ENCODE measurements at regions of chr1 and their contacts with region 1.

Region 1: GRCh38 chr1:198157241-198157846 is 546 bp downstream of the NEK7 start:
- DNase-seq: peak; percentile 83
- ATAC-seq: peak; percentile 32
- H3K4me3 Mint-ChIP-seq: peak overlapping the region; percentile 98
- H3K27ac Mint-ChIP-seq: peak overlapping the region; percentile 99
- H3K4me1 Mint-ChIP-seq: peaks cover 29% of the 10 kb centered on the region
- H3K27me3 Mint-ChIP-seq: no peaks in the 10 kb centered on the region

Region 2: DNA sequence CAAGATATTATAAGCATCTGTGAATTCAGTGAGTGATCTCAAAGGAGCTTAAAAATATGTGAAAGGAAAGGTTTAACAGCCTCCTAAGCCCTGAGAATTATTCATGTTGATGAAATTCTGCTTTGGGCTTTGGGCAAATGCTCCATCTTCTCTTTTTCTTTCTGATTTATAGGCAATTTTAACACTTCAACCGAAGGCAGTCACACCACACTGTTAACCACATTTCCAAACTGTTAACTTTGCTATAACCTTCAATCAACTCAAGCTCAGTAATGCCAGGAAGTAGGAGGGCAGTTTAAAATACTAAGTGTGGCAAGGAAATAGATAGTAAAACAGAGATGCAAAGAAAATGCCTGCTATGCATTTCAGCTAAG is 54.9 kb before region 1 on chr1:
- POLR2A ChIA-PET with region 1: interaction called, 10 read pairs
- DNase-seq: no peak
- ATAC-seq: peak; percentile 87
- H3K4me3 Mint-ChIP-seq: peak overlapping the region; percentile 72
- H3K27ac Mint-ChIP-seq: peak overlapping the region; percentile 90
- H3K4me1 Mint-ChIP-seq: peaks cover 27% of the 10 kb centered on the region
- H3K27me3 Mint-ChIP-seq: no peaks in the 10 kb centered on the region

Region 3: DNA sequence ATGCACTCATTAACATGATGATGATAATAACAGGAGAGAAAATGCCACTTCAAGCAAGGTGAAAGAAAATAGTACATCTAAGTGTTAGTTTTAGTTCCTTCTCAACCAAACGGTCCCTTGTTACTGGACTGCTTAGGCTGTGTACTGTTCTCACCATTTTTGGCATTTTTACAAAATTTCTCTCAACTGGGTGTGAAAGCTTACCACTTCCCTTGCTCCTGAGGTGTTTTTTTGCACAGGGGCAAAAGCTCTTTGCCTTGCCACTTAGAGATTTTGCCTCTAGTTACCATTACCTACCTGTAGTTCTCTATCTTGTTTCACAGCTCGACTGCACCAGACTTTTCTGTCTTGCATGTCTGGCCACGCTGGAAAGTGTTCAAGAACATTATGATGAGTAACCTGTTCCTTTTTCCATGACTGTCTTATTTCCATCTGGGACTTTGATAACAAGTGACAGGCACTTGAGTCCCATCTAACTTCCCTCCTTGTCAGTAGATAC is 10.1 kb after region 1 on chr1:
- POLR2A ChIA-PET with region 1: interaction called, 17 read pairs
- DNase-seq: no peak
- ATAC-seq: peak; percentile 45
- H3K4me3 Mint-ChIP-seq: peak overlapping the region; percentile 82
- H3K27ac Mint-ChIP-seq: peak overlapping the region; percentile 94
- H3K4me1 Mint-ChIP-seq: peaks cover 71% of the 10 kb centered on the region
- H3K27me3 Mint-ChIP-seq: no peaks in the 10 kb centered on the region

Region 4: DNA sequence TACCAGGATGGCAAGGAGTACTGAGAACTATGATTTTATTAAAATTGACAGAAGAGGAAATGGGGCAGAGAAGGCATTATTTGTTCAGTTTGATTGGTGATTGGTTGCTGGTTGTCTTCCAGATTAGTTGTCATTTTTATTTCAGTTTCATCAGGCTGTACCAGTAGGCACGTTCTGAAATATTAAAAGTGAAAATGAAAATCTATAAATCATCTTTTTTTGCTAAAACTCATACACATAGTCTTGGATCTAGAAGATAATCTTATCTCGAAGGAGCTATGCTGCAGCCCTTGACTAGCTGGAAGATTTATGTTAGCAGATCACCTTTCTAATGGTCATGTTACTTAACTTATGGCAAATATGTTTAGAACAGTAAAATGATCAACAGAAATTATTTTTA is 28.4 kb after region 1 on chr1:
- POLR2A ChIA-PET with region 1: interaction called, 11 read pairs
- DNase-seq: no peak
- ATAC-seq: no peak
- H3K4me3 Mint-ChIP-seq: peak overlapping the region; percentile 57
- H3K27ac Mint-ChIP-seq: peak overlapping the region; percentile 81
- H3K4me1 Mint-ChIP-seq: peaks cover 56% of the 10 kb centered on the region
- H3K27me3 Mint-ChIP-seq: no peaks in the 10 kb centered on the region